ENCODE measurements at regions of chr3 and their contacts with region 1.

Region 1: GRCh38 chr3:17911986-17912760 is 169.7 kb upstream of the TBC1D5 start:
- DNase-seq: no peak
- H3K4me3 ChIP-seq: no peak overlapping the region
- H3K4me3 Mint-ChIP-seq: peak overlapping the region in 1 of 2 donors; percentile 40
- H3K27ac ChIP-seq: no peak overlapping the region
- H3K27ac Mint-ChIP-seq: no peak overlapping the region
- H3K4me1 ChIP-seq: peaks cover 0 to 4% of the 10 kb centered on the region in 2 donors
- H3K4me1 Mint-ChIP-seq: peaks cover 12% of the 10 kb centered on the region
- H3K27me3 ChIP-seq: no peaks in the 10 kb centered on the region
- H3K27me3 Mint-ChIP-seq: peaks cover 0 to 2% (median 0%) of the 10 kb centered on the region in 3 donors
- CTCF ChIP-seq: no peak

Region 2: GRCh38 chr3:17874632-17875031 is 37.5 kb before region 1 on chr3:
- intact Hi-C with region 1: loop called in 1 of 2 experiments (anchors 2 kb)
- DNase-seq: peak; percentile 25 to 52 (median 27)
- H3K4me3 ChIP-seq: peak overlapping the region in 1 of 3 experiments; percentile 10
- H3K4me3 Mint-ChIP-seq: no peak overlapping the region
- H3K27ac ChIP-seq: no peak overlapping the region
- H3K27ac Mint-ChIP-seq: peak overlapping the region in 4 of 7 donors; percentile 3 to 70 (median 6)
- H3K4me1 ChIP-seq: peaks cover 12 to 14% of the 10 kb centered on the region in 2 donors
- H3K4me1 Mint-ChIP-seq: peaks cover 15% of the 10 kb centered on the region
- H3K27me3 ChIP-seq: no peaks in the 10 kb centered on the region
- H3K27me3 Mint-ChIP-seq: no peaks in the 10 kb centered on the region
- CTCF ChIP-seq: no peak